Ascending aorta (tissue), 2 donors: ENCODE measurements at regions of chr22 and their contacts with region 1.

Region 1: GRCh38 chr22:17084554-17085276 is at the start of gene IL17RA:
- DNase-seq: peak; percentile 57 to 94
- H3K4me3 ChIP-seq: peak within 1 kb of the TSS; percentile 73 to 97
- H3K27ac ChIP-seq: peak within 1 kb of the TSS; percentile 78 to 94
- H3K4me1 ChIP-seq: peaks cover 4 to 8% of the 10 kb centered on the region in 2 donors
- H3K27me3 ChIP-seq: no peaks in the 10 kb centered on the region
- CTCF ChIP-seq: no peak
- total RNA-seq, gene IL17RA: 84.1 TPM

Region 2: DNA sequence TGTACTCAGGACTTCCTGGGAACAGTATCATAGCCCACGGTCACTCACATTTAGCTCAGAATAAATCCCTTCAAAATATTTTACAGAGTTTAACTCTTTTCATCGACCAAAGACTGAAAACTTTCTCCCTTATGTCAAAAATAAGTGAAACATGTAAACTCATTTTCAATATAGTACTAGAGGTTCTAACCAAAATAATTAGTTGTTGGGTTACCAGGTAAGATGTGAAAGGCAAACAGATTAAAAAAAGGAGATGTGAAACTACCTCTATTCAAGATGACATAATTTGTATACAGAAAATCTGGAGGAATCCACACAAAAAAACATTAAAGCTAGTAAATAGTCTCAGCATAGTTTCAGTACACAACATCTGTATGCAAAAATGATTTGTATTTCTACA is 279.8 kb before region 1 on chr22:
- intact Hi-C with region 1: no loop called
- DNase-seq: no peak
- H3K4me3 ChIP-seq: no peak overlapping the region
- H3K27ac ChIP-seq: no peak overlapping the region
- H3K4me1 ChIP-seq: no peaks in the 10 kb centered on the region
- H3K27me3 ChIP-seq: no peaks in the 10 kb centered on the region
- CTCF ChIP-seq: no peak

Region 3: DNA sequence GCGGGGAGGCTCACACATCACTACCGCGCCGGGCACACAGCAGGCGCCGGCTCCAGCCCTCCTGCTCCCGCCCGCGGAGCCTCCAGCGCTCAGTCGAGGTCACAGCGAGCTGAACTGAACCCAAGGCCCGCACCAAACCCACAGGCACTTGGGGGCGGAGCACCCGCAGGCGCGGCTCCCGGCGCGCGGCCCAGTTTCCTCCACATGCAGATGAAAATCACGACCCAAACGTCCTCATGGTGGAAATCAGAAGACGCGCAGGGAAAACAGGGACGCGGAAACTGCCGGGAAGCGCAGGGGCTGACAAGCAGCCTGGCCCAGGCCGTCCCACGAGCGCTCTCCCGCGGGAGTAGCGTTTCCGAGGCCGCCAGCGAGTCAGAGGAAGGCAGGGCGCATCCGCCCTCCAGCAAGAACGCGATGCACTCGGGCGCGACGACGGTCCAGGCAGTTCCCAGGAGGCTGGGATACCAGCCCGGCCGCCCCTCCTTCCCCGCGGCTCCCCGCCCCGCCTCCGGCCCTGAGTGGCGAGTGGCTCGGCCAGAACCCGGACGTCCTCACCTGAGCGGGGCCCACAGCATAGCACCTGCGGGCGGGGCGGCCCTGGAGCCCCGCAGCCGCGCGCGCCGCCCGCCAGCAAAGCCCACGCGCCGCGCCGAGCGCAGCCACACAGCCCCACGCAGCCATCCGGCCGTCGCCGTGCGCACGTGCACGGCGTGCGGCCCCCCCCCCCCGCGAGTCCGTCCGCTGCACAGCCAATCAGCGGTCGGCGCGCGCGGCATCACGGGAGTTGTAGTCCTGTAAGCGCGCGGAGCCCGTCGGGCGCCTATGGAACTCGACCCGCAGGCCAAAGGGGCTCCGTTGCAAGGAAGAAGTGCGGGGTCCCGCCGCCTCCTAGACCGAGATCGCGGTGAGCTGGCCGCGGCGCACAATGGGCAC is 74.1 kb after region 1 on chr22 and contains the start of gene HDHD5:
- intact Hi-C with region 1: loop called (anchors 1 kb)
- DNase-seq: peak; percentile 31 to 93
- H3K4me3 ChIP-seq: peak within 1 kb of the TSS; percentile 73 to 81
- H3K27ac ChIP-seq: peak within 1 kb of the TSS; percentile 90
- H3K4me1 ChIP-seq: peaks cover 9 to 20% of the 10 kb centered on the region in 2 donors
- H3K27me3 ChIP-seq: no peaks in the 10 kb centered on the region
- CTCF ChIP-seq: no peak
- total RNA-seq, gene HDHD5: 55.8 TPM